ENCODE measurements at regions of chr7 and their contacts with region 1.

Region 1: GRCh38 chr7:18352339-18353255 is 143.0 kb upstream of the HDAC9 start:
- DNase-seq: peak; percentile 81
- ATAC-seq: peak; percentile 81
- H3K4me3 ChIP-seq: no peak overlapping the region
- H3K27ac ChIP-seq: no peak overlapping the region
- H3K4me1 ChIP-seq: peaks cover 9% of the 10 kb centered on the region
- H3K27me3 ChIP-seq: no peaks in the 10 kb centered on the region
- CTCF ChIP-seq: peak; percentile 82
- POLR2A ChIP-seq: no peak
- RAD21 ChIP-seq: peak; percentile 86

Region 2: GRCh38 chr7:17247357-17247756 is 1105.2 kb before region 1 on chr7:
- CTCF ChIA-PET with region 1: no interaction called
- POLR2A ChIA-PET with region 1: no interaction called
- dilution Hi-C with region 1: no loop called
- in situ Hi-C with region 1: no loop called
- intact Hi-C with region 1: no loop called
- DNase-seq: no peak
- ATAC-seq: no peak
- H3K4me3 ChIP-seq: no peak overlapping the region
- H3K27ac ChIP-seq: no peak overlapping the region
- H3K4me1 ChIP-seq: no peaks in the 10 kb centered on the region
- H3K27me3 ChIP-seq: no peaks in the 10 kb centered on the region
- CTCF ChIP-seq: no peak
- POLR2A ChIP-seq: no peak
- RAD21 ChIP-seq: no peak

Region 3: GRCh38 chr7:18276383-18276782 is 76.2 kb before region 1 on chr7:
- CTCF ChIA-PET with region 1: no interaction called
- POLR2A ChIA-PET with region 1: no interaction called
- dilution Hi-C with region 1: no loop called
- in situ Hi-C with region 1: no loop called
- intact Hi-C with region 1: no loop called
- DNase-seq: no peak
- ATAC-seq: no peak
- H3K4me3 ChIP-seq: no peak overlapping the region
- H3K27ac ChIP-seq: no peak overlapping the region
- H3K4me1 ChIP-seq: no peaks in the 10 kb centered on the region
- H3K27me3 ChIP-seq: no peaks in the 10 kb centered on the region; the same call in none of the 2 replicates
- CTCF ChIP-seq: no peak
- POLR2A ChIP-seq: no peak
- RAD21 ChIP-seq: no peak

Region 4: DNA sequence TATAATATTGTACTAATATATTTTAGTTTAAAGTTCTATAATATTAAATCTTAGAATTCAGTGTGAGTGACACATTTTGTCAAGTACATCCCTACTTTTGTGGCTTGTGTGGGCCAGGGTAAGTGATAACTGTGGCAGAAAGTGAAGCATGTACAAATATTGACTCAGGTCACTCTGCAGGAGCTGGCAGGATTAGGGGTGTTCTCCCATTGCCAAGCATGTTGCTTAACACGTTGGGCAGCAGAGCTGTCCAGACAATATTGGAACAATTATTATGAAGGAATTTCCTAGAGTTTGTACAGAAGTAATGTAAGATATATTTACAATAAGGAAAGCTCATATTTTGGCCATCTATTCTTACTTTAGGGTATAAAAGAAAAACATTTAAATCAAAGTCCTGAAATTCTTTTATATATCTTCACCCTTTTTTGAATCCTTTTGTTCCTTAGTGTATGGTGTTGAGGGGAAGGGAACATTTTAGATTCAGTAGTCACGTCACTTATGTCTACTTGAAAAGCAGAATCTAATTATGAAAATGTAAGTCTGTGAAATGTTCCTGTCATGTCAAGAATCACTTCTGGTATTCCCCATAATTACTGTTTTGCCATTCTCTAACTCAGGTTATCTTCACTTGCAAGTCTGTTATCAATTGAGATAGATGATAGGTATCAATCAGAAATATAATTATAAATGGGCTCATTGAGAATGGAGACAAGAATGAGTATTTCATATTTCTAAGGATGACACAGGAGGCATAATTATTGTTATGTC is 147.0 kb after region 1 on chr7:
- CTCF ChIA-PET with region 1: no interaction called
- POLR2A ChIA-PET with region 1: no interaction called
- dilution Hi-C with region 1: no loop called
- in situ Hi-C with region 1: no loop called
- intact Hi-C with region 1: loop called (anchors 5 kb)
- DNase-seq: no peak
- ATAC-seq: no peak
- H3K4me3 ChIP-seq: no peak overlapping the region
- H3K27ac ChIP-seq: no peak overlapping the region
- H3K4me1 ChIP-seq: no peaks in the 10 kb centered on the region; the same call in 1 of the 2 replicates
- H3K27me3 ChIP-seq: no peaks in the 10 kb centered on the region
- CTCF ChIP-seq: no peak
- POLR2A ChIP-seq: no peak
- RAD21 ChIP-seq: no peak

Region 5: GRCh38 chr7:18521945-18522566 is 169.5 kb after region 1 on chr7:
- CTCF ChIA-PET with region 1: no interaction called
- POLR2A ChIA-PET with region 1: no interaction called
- dilution Hi-C with region 1: no loop called
- in situ Hi-C with region 1: no loop called
- intact Hi-C with region 1: no loop called
- DNase-seq: peak; percentile 17
- ATAC-seq: no peak
- H3K4me3 ChIP-seq: no peak overlapping the region
- H3K27ac ChIP-seq: no peak overlapping the region
- H3K4me1 ChIP-seq: peaks cover 5% of the 10 kb centered on the region
- H3K27me3 ChIP-seq: no peaks in the 10 kb centered on the region
- CTCF ChIP-seq: no peak
- POLR2A ChIP-seq: no peak
- RAD21 ChIP-seq: no peak

Region 6: DNA sequence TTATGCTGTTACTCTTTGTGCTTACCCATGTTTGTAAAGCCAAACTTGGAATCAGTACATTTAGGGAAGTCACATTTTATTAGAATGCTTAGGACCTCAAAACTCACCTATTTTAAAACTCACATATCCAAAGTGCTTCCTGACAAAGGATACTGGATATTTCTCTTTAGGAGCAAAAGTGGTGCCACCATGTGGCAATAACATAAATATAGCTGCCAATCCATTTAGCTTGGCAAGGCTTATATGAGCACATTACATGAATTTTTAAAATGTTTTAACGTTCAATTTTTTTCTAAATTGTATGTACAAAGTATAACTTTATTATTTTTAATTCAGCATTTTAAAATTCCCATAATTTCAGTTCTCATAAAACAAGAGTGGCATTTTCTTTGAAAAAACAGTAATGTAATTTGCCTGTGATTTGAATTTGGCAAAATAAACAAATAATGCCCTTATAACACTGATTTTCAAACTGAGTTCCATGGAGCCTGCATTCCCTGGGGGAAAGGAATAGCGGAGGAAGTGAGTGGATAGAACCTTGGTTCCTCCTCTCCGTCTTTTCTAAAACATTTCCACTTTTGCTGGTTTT is 218.4 kb after region 1 on chr7:
- CTCF ChIA-PET with region 1: interaction called, 19 read pairs
- POLR2A ChIA-PET with region 1: no interaction called
- dilution Hi-C with region 1: no loop called
- in situ Hi-C with region 1: loop called (anchors 10 kb)
- intact Hi-C with region 1: loop called (anchors 1 kb)
- DNase-seq: peak; percentile 42
- ATAC-seq: no peak
- H3K4me3 ChIP-seq: no peak overlapping the region
- H3K27ac ChIP-seq: no peak overlapping the region
- H3K4me1 ChIP-seq: no peaks in the 10 kb centered on the region
- H3K27me3 ChIP-seq: no peaks in the 10 kb centered on the region
- CTCF ChIP-seq: peak; percentile 54
- POLR2A ChIP-seq: no peak
- RAD21 ChIP-seq: peak; percentile 68

Region 7: GRCh38 chr7:18590744-18591340 is 238.2 kb after region 1 on chr7:
- CTCF ChIA-PET with region 1: interaction called, 5 read pairs
- POLR2A ChIA-PET with region 1: no interaction called
- dilution Hi-C with region 1: no loop called
- in situ Hi-C with region 1: no loop called
- intact Hi-C with region 1: loop called (anchors 1 kb)
- DNase-seq: peak; percentile 67
- ATAC-seq: peak; percentile 80
- H3K4me3 ChIP-seq: no peak overlapping the region
- H3K27ac ChIP-seq: no peak overlapping the region
- H3K4me1 ChIP-seq: 0 out of 2 replicates have a peak, but pooled peaks cover 1% of the 10 kb centered on the region
- H3K27me3 ChIP-seq: no peaks in the 10 kb centered on the region
- CTCF ChIP-seq: peak; percentile 68
- POLR2A ChIP-seq: no peak
- RAD21 ChIP-seq: peak; percentile 81

Region 8: DNA sequence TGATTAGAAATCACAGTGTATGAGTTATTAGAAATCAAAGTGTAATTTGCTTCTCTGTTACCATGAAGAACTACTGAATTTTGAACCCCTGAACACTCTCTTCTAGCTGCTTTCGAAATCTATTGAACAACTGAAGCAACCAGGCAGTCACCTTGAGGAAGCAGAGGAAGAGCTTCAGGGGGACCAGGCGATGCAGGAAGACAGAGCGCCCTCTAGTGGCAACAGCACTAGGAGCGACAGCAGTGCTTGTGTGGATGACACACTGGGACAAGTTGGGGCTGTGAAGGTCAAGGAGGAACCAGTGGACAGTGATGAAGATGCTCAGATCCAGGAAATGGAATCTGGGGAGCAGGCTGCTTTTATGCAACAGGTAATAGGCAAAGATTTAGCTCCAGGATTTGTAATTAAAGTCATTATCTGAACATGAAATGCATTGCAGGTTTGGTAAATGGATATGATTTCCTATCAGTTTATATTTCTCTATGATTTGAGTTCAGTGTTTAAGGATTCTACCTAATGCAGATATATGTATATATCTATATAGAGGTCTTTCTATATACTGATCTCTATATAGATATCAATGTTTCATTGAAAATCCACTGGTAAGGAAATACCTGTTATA is 313.6 kb after region 1 on chr7:
- CTCF ChIA-PET with region 1: no interaction called
- POLR2A ChIA-PET with region 1: no interaction called
- dilution Hi-C with region 1: no loop called
- in situ Hi-C with region 1: loop called (anchors 10 kb)
- intact Hi-C with region 1: loop called (anchors 1 kb)
- DNase-seq: peak; percentile 74
- ATAC-seq: peak; percentile 84
- H3K4me3 ChIP-seq: no peak overlapping the region
- H3K27ac ChIP-seq: no peak overlapping the region
- H3K4me1 ChIP-seq: no peaks in the 10 kb centered on the region
- H3K27me3 ChIP-seq: no peaks in the 10 kb centered on the region
- CTCF ChIP-seq: peak; percentile 81
- POLR2A ChIP-seq: no peak
- RAD21 ChIP-seq: peak; percentile 67

Region 9: GRCh38 chr7:19107356-19108146 is 755.0 kb after region 1 on chr7:
- CTCF ChIA-PET with region 1: no interaction called
- POLR2A ChIA-PET with region 1: no interaction called
- dilution Hi-C with region 1: no loop called
- in situ Hi-C with region 1: loop called (anchors 25 kb)
- intact Hi-C with region 1: loop called (anchors 5 kb)
- DNase-seq: peak; percentile 68
- ATAC-seq: peak; percentile 74
- H3K4me3 ChIP-seq: peak overlapping the region; percentile 45
- H3K27ac ChIP-seq: peak overlapping the region; percentile 52
- H3K4me1 ChIP-seq: peaks cover 6% of the 10 kb centered on the region
- H3K27me3 ChIP-seq: no peaks in the 10 kb centered on the region
- CTCF ChIP-seq: no peak
- POLR2A ChIP-seq: no peak
- RAD21 ChIP-seq: no peak

Region 10: DNA sequence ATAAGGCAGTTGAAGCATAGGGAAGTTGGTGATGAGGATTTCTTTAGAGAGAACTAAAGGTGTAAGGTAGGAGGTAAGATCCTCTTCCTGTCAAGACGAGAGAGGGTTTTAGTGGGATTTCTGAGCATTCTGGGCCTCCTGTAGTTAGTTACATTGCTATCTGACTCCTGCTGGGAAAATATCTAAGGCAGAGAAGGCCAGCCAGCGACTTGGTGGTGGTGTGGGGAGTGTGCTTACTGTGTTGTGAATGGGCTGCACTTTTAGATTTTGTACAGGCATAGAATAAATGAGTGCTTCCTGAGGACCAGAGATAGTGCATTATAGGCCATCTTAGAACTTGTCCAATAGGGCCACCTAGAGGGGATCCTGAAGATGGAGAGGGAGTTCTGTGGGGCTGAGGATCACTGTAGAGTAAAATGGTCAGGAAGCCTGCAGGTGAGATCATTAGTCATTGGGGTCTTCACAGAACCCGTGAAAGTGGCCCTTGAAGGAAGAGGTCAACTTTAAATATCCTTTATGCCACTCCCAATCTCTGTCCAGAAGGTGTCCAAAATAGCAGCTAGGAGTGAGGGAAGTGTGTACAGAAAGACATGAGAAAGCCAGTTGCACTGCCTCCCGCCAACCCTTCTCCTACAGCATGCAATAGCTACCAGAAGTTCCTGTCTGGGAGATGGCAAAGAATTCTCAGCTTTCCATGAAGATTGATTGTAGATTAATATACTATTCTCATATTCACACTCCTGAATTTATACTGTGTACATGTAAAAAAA is 1089.6 kb after region 1 on chr7:
- CTCF ChIA-PET with region 1: no interaction called
- POLR2A ChIA-PET with region 1: no interaction called
- dilution Hi-C with region 1: no loop called
- in situ Hi-C with region 1: loop called (anchors 25 kb)
- intact Hi-C with region 1: loop called (anchors 5 kb)
- DNase-seq: peak; percentile 75
- ATAC-seq: peak; percentile 99
- H3K4me3 ChIP-seq: no peak overlapping the region
- H3K27ac ChIP-seq: no peak overlapping the region
- H3K4me1 ChIP-seq: no peaks in the 10 kb centered on the region
- H3K27me3 ChIP-seq: no peaks in the 10 kb centered on the region
- CTCF ChIP-seq: peak; percentile 83
- POLR2A ChIP-seq: no peak
- RAD21 ChIP-seq: peak; percentile 91

Measured in IMR-90 (cell line).